ENCODE measurements at regions of chr21 and their contacts with region 1.

Region 1: DNA sequence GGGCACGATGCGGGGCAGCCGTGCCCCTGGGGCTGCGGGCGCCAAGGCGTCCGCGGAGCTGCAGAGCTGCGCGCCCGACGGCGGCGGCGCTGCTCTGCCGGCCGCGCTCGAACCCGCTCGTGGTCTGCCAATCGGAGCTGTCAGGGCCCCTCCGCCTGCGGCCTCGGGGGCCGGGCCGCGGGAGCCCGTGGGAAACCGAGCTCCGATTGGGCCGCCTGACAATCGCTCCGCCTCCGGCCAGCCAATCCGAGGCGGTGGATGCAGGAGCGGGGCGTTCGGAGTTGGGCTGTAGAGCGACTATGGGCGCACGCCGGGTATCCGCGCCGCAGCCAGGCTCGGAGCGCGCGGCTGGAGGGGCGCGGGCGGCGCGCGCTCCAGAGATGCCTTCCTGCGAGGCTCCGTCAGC is 100.5 kb upstream of the SOD1 start:
- DNase-seq: peak; percentile 89 to 94 (median 90)
- H3K4me3 ChIP-seq: peak overlapping the region; percentile 43 to 78
- H3K4me3 Mint-ChIP-seq: peak overlapping the region in 7 of 8 donors; percentile 85 to 94 (median 93)
- H3K27ac ChIP-seq: peak overlapping the region; percentile 1
- H3K27ac Mint-ChIP-seq: peak overlapping the region in 1 of 7 donors; percentile 41
- H3K4me1 ChIP-seq: peaks cover 27% of the 10 kb centered on the region
- H3K4me1 Mint-ChIP-seq: peaks cover 14 to 45% (median 30%) of the 10 kb centered on the region in 4 donors
- H3K27me3 ChIP-seq: no peaks in the 10 kb centered on the region
- H3K27me3 Mint-ChIP-seq: peaks cover 7 to 12% of the 10 kb centered on the region in 2 donors

Region 2: DNA sequence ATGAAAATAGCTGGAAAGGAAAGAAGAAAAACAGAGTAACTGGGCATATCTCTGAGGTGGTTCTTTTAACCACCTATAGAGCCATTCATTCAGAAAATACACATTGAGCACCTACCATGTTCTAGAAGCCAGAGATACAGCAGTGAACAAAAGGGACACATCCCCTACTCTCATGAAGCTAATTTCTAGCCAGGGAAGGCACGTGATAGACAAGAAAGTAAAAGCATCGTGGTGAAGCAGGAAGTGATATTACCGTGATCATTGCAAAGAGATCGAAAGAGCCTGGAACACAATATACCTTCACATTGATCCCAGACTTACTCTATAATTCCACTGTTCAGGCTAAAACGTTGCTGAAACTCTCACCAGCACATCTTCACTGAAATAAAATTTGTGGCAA is 290.9 kb before region 1 on chr21:
- CTCF ChIA-PET with region 1: no interaction called
- POLR2A ChIA-PET with region 1: interaction called, 5 read pairs
- intact Hi-C with region 1: loop called (anchors 2 kb)
- DNase-seq: peak in 4 of 5 donors; percentile 5 to 9 (median 6)
- H3K4me3 ChIP-seq: peak overlapping the region in 1 of 2 donors; percentile 37
- H3K4me3 Mint-ChIP-seq: peak overlapping the region; percentile 2 to 82 (median 60)
- H3K27ac ChIP-seq: no peak overlapping the region
- H3K27ac Mint-ChIP-seq: peak overlapping the region in 2 of 7 donors; percentile 38 to 59
- H3K4me1 ChIP-seq: peaks cover 29% of the 10 kb centered on the region
- H3K4me1 Mint-ChIP-seq: peaks cover 11 to 46% (median 28%) of the 10 kb centered on the region in 4 donors
- H3K27me3 ChIP-seq: no peaks in the 10 kb centered on the region
- H3K27me3 Mint-ChIP-seq: peaks cover 0 to 1% of the 10 kb centered on the region in 2 donors

Region 3: DNA sequence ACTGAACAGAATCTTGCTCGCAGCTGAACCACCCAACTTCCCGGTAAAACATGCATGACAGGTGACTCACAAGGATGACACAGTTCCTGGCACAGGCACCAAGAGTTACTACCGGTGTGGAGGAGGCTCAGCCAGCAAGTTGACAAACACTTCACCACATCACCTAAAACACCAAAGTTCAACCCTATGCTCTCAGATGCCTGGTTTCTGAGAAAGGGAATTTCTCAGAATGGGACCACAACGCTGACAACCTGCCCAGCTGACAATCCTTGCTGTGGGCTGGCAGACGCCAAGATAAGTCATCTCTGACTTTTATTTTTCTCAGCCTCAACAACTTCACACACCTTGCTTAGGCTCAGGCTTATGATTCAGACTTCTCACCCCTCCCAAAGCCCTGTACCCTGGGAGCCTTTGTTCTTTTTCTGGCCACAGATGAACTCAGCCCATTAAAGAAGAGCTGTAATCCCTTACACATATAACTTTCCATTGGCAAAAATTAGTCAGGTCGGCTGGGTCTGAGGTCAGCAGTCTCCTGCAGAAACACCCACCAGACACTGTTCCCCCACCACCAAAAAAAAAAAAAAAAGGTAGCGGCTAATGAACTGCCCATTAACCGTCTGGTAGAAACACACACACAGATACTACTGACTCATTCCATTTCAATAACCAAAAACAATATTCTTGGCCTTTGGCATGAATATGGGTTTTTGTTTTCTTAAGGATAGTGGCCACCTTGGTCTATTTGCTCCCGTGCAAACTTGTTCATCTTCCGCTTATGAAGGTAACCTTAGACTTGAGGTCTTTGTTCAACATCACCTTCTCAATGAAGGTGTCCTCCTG is 204.1 kb before region 1 on chr21:
- CTCF ChIA-PET with region 1: no interaction called
- POLR2A ChIA-PET with region 1: no interaction called
- intact Hi-C with region 1: loop called (anchors 2 kb)
- DNase-seq: peak; percentile 74 to 92 (median 84)
- H3K4me3 ChIP-seq: no peak overlapping the region
- H3K4me3 Mint-ChIP-seq: peak overlapping the region in 7 of 8 donors; percentile 36 to 75 (median 64)
- H3K27ac ChIP-seq: peak overlapping the region; percentile 33
- H3K27ac Mint-ChIP-seq: peak overlapping the region; percentile 29 to 93 (median 90)
- H3K4me1 ChIP-seq: peaks cover 49% of the 10 kb centered on the region
- H3K4me1 Mint-ChIP-seq: peaks cover 29 to 60% (median 36%) of the 10 kb centered on the region in 4 donors
- H3K27me3 ChIP-seq: no peaks in the 10 kb centered on the region
- H3K27me3 Mint-ChIP-seq: no peaks in the 10 kb centered on the region

Region 4: GRCh38 chr21:31537872-31538576 is 20.9 kb before region 1 on chr21:
- CTCF ChIA-PET with region 1: no interaction called
- POLR2A ChIA-PET with region 1: no interaction called
- intact Hi-C with region 1: no loop called
- DNase-seq: no peak
- H3K4me3 ChIP-seq: no peak overlapping the region
- H3K4me3 Mint-ChIP-seq: no peak overlapping the region
- H3K27ac ChIP-seq: no peak overlapping the region
- H3K27ac Mint-ChIP-seq: no peak overlapping the region
- H3K4me1 ChIP-seq: no peaks in the 10 kb centered on the region
- H3K4me1 Mint-ChIP-seq: no peaks in the 10 kb centered on the region
- H3K27me3 ChIP-seq: no peaks in the 10 kb centered on the region
- H3K27me3 Mint-ChIP-seq: no peaks in the 10 kb centered on the region

Region 5: GRCh38 chr21:31659536-31660258 is 100.7 kb after region 1 on chr21 and contains the start of gene SOD1:
- CTCF ChIA-PET with region 1: no interaction called
- POLR2A ChIA-PET with region 1: no interaction called
- intact Hi-C with region 1: loop called (anchors 5 kb)
- DNase-seq: peak; percentile 95 to 97 (median 96)
- H3K4me3 ChIP-seq: peak within 1 kb of the TSS; percentile 70 to 79
- H3K4me3 Mint-ChIP-seq: peak within 1 kb of the TSS; percentile 98 to 100 (median 100)
- H3K27ac ChIP-seq: peak within 1 kb of the TSS; percentile 77
- H3K27ac Mint-ChIP-seq: peak within 1 kb of the TSS; percentile 81 to 100 (median 99)
- H3K4me1 ChIP-seq: peaks cover 64% of the 10 kb centered on the region
- H3K4me1 Mint-ChIP-seq: peaks cover 43 to 80% (median 60%) of the 10 kb centered on the region in 4 donors
- H3K27me3 ChIP-seq: no peaks in the 10 kb centered on the region
- H3K27me3 Mint-ChIP-seq: no peaks in the 10 kb centered on the region
- total RNA-seq, gene SOD1: 178 to 198 TPM

Measured in CD4-positive, alpha-beta memory T cell (primary cell).